A549 (cell line): ENCODE measurements at regions of chr11 and their contacts with region 1.

Region 1: DNA sequence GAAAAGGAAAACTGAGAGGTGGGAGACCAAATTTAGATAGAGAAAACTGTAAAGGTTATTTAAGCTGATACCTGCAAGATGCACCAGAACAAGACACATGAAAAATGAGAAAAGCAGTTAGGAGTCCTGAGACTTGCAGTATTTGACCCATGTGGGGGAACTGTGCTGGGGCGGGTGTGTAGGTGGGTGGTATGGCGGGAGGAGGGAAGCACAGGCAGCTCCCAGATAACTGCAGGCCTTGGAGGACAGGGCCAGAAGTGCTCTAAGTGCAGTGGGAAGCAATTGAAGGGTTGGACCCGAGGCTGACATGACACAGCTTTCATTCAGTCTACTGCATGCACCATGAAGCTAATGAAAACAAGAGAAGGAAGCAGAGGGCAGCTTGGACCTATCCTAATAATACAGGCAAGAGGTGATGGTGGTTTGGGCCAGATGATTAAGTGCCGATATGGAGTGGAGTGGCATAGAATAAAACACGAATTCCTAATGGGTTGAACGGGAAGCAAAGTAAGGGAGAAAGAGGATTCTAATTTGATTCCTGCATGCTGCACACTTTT is 48.0 kb upstream of the ANO3 start:
- DNase-seq: no peak
- ATAC-seq: peak; percentile 57 to 60; a peak in 5 of 6 replicates
- H3K4me3 ChIP-seq: peak overlapping the region; percentile 51
- H3K27ac ChIP-seq: no peak overlapping the region; a peak in 1 of 6 replicates
- H3K4me1 ChIP-seq: 0 out of 3 replicates have a peak, but pooled peaks cover 3% of the 10 kb centered on the region
- CTCF ChIP-seq: no peak
- EP300 ChIP-seq: no peak
- POLR2A ChIP-seq: no peak
- RAD21 ChIP-seq: no peak

Region 2: GRCh38 chr11:26143566-26144290 is 140.2 kb before region 1 on chr11:
- CTCF ChIA-PET with region 1: no interaction called
- POLR2A ChIA-PET with region 1: no interaction called
- DNase-seq: no peak
- ATAC-seq: no peak
- H3K4me3 ChIP-seq: no peak overlapping the region
- H3K27ac ChIP-seq: no peak overlapping the region
- H3K4me1 ChIP-seq: no peaks in the 10 kb centered on the region
- CTCF ChIP-seq: no peak
- EP300 ChIP-seq: no peak
- POLR2A ChIP-seq: no peak
- RAD21 ChIP-seq: no peak

Region 3: GRCh38 chr11:26297189-26297975 is 13.5 kb after region 1 on chr11:
- CTCF ChIA-PET with region 1: interaction called, 16 read pairs
- POLR2A ChIA-PET with region 1: no interaction called
- DNase-seq: peak; percentile 18 to 77
- ATAC-seq: peak; percentile 79 to 82
- H3K4me3 ChIP-seq: no peak overlapping the region
- H3K27ac ChIP-seq: no peak overlapping the region
- H3K4me1 ChIP-seq: no peaks in the 10 kb centered on the region
- CTCF ChIP-seq: peak; percentile 71
- EP300 ChIP-seq: no peak
- POLR2A ChIP-seq: no peak
- RAD21 ChIP-seq: peak; percentile 73 to 74